ENCODE measurements at regions of chr2 and their contacts with region 1.

Region 1: DNA sequence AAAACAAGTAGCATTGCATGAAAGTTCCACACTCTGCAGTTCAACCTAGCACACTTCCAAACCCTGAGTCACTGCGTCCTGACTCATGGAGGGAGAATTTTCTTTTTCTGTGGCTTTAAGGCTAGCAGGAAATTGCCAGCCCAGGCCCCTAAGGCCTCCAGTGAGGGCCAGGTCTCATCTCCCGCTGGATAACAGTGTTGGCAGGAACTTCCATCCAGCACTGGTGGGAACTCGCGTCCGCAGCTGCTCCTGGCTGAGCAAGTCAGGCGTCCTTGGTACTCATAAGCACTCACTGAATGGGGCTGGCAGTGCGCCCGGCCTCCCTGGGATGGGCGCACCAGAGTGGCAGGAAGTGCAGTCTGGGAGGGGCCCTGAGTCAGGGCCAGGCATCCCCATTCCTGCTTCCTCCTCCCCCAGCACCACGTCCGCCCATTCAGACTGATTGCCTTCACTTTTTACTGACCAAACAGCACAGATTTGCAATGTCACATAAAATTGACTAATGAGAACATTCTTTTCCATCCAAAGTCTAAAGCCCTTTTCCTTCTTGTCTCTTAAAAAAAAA is 14.3 kb downstream of the MALL start:
- DNase-seq: peak; percentile 100
- H3K4me3 ChIP-seq: no peak overlapping the region
- H3K27ac ChIP-seq: peak overlapping the region; percentile 98
- H3K4me1 ChIP-seq: peaks cover 69% of the 10 kb centered on the region
- H3K27me3 ChIP-seq: no peaks in the 10 kb centered on the region
- CTCF ChIP-seq: no peak
- POLR2A ChIP-seq: peak; percentile 67

Region 2: GRCh38 chr2:110149330-110150220 is 48.2 kb after region 1 on chr2:
- CTCF ChIA-PET with region 1: no interaction called
- POLR2A ChIA-PET with region 1: interaction called, 5 read pairs
- dilution Hi-C with region 1: no loop called
- intact Hi-C with region 1: loop called (anchors 1 kb)
- DNase-seq: peak; percentile 95
- H3K4me3 ChIP-seq: peak overlapping the region in 1 of 3 experiments; percentile 8
- H3K27ac ChIP-seq: peak overlapping the region; percentile 91
- H3K4me1 ChIP-seq: peaks cover 42% of the 10 kb centered on the region
- H3K27me3 ChIP-seq: no peaks in the 10 kb centered on the region
- CTCF ChIP-seq: no peak
- POLR2A ChIP-seq: peak; percentile 58

Region 3: DNA sequence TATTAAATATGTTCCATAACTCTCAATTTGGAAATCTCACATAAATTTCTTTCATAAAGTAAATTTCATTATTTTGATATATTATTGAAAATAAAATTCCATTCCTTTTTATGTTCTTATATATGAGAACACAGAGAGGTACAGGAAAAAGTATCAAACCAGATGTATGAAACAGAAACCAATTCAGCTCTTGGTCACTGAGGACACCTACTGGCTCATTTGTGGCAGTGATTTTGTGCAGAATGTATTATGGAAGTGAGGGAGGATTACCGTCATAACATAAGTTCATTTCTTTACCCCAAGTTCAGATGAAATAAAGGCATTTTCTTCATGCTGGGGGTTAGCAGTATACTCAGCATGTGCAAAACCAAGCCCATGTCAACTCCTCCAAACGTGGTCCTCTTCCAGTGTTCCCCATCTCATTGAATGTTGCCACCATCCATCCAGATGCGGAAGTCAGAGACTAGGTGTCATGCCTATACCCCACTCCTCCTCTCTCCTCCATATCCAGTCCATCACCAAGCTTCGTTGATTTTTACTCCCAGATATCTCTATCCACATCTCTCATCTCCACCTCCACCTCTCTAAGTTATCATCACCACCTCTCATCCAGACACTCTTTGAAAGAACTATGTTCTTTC is 55.9 kb after region 1 on chr2:
- CTCF ChIA-PET with region 1: interaction called, 23 read pairs
- POLR2A ChIA-PET with region 1: interaction called, 5 read pairs
- dilution Hi-C with region 1: no loop called
- intact Hi-C with region 1: no loop called
- DNase-seq: peak; percentile 78
- H3K4me3 ChIP-seq: no peak overlapping the region
- H3K27ac ChIP-seq: peak overlapping the region; percentile 82
- H3K4me1 ChIP-seq: peaks cover 29% of the 10 kb centered on the region
- H3K27me3 ChIP-seq: no peaks in the 10 kb centered on the region
- CTCF ChIP-seq: peak; percentile 68 to 74
- POLR2A ChIP-seq: no peak

Region 4: DNA sequence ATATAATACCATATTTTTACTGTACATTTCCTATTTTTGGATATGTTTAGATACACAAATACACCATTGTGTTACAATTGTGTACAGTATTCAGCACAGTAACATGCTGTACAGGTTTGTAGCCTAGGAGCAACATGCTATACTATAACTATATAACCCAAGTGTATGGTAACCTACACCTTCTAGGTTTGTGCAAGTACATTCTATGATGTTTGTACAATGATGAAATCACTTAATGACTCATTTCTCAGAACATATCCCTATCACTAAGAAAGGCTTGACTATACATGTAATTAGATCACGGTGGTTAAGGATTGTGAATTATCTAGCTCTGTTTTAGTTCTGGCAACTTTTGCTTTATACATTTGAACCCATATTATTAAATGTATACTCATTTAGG is 72.2 kb after region 1 on chr2:
- CTCF ChIA-PET with region 1: no interaction called
- POLR2A ChIA-PET with region 1: no interaction called
- dilution Hi-C with region 1: no loop called
- intact Hi-C with region 1: no loop called
- DNase-seq: peak; percentile 10
- H3K4me3 ChIP-seq: no peak overlapping the region
- H3K27ac ChIP-seq: no peak overlapping the region
- H3K4me1 ChIP-seq: peaks cover 6% of the 10 kb centered on the region
- H3K27me3 ChIP-seq: no peaks in the 10 kb centered on the region
- CTCF ChIP-seq: no peak
- POLR2A ChIP-seq: no peak

Measured in endothelial cell of umbilical vein (primary cell).